ENCODE measurements at regions of chr6 and their contacts with region 1.

Region 1: DNA sequence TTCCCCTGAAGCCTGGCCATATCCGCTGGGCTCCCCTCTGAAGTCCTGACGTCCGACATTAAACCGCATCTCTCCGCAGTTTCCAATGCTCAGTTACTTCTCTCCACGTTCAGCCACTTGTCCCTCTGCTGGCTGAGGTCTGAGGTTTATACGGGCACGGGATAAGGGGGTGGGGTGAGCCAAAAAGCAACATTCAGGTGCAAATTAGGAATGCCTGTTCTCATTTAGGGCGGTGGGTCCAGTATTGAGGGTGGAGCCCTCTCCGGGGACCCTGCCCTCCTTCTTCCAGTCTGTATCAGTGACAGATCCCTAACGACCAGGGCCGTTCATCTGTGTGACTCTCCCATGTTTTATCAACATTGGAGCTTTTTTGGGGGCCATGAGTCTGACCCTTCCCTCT is 1454.4 kb downstream of the HACE1 start:
- DNase-seq: no peak
- H3K4me3 ChIP-seq: no peak overlapping the region
- H3K27ac ChIP-seq: no peak overlapping the region
- H3K4me1 ChIP-seq: no peaks in the 10 kb centered on the region
- H3K27me3 ChIP-seq: no peaks in the 10 kb centered on the region
- CTCF ChIP-seq: no peak
- POLR2A ChIP-seq: no peak

Region 2: DNA sequence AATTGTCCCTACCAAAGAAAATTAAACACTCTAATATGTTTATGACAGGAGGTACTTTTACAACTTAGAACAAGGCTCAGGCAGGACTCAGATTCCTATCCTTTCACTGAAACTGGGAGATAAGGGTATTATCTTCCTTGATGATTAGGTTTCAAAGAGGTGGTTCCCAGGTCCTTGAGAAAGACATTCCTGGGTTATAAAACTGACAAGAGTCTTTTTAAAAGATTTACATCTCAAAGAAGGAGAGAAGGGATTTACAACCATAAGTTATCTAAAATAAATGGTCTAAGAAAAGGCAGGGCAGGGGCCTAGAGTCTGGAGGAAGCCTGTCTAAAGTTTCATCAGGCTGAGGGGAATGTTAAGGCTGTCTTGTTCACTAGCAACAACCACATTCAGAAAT is 38.1 kb before region 1 on chr6:
- intact Hi-C with region 1: loop called (anchors 2 kb)
- DNase-seq: no peak
- H3K4me3 ChIP-seq: no peak overlapping the region
- H3K27ac ChIP-seq: no peak overlapping the region
- H3K4me1 ChIP-seq: no peaks in the 10 kb centered on the region
- H3K27me3 ChIP-seq: no peaks in the 10 kb centered on the region
- CTCF ChIP-seq: no peak
- POLR2A ChIP-seq: no peak

Region 3: DNA sequence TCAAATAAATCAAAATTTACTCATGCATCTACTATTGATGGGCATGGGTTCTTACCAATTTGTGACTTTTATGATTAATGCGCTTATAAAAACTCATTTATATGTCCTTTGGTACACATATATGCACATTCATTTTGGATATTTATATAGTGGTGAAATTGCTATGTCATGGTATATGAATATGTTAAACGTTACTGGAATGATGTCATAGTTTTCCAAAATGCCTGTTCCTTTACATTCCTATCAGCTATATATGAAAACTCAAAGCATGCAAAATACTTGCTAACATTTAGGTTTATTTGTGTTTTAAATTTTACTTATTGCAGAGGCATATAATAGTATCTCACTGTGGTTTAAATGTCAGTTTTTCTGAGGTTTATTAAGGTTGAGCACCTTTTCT is 51.3 kb after region 1 on chr6:
- intact Hi-C with region 1: no loop called
- DNase-seq: no peak
- H3K4me3 ChIP-seq: no peak overlapping the region
- H3K27ac ChIP-seq: no peak overlapping the region
- H3K4me1 ChIP-seq: no peaks in the 10 kb centered on the region
- H3K27me3 ChIP-seq: no peaks in the 10 kb centered on the region
- CTCF ChIP-seq: no peak
- POLR2A ChIP-seq: no peak

Measured in vagina (tissue), 2 donors.